CD8-positive, alpha-beta T cell (primary cell): ENCODE measurements at regions of chr16 and their contacts with region 1.

Region 1: GRCh38 chr16:12079412-12079965 is 103.0 kb downstream of the SNX29 start:
- DNase-seq: peak in 3 of 9 experiments; percentile 4 to 59 (median 21)
- ATAC-seq: peak; percentile 9
- H3K4me3 ChIP-seq: peak overlapping the region; percentile 12 to 13
- H3K4me3 Mint-ChIP-seq: peak overlapping the region; percentile 65
- H3K27ac ChIP-seq: peak overlapping the region; percentile 55 to 88
- H3K27ac Mint-ChIP-seq: peak overlapping the region; percentile 93
- H3K4me1 ChIP-seq: peaks cover 72% of the 10 kb centered on the region
- H3K4me1 Mint-ChIP-seq: peaks cover 77% of the 10 kb centered on the region
- H3K27me3 ChIP-seq: no peaks in the 10 kb centered on the region
- H3K27me3 Mint-ChIP-seq: no peaks in the 10 kb centered on the region
- CTCF ChIP-seq: no peak

Region 2: DNA sequence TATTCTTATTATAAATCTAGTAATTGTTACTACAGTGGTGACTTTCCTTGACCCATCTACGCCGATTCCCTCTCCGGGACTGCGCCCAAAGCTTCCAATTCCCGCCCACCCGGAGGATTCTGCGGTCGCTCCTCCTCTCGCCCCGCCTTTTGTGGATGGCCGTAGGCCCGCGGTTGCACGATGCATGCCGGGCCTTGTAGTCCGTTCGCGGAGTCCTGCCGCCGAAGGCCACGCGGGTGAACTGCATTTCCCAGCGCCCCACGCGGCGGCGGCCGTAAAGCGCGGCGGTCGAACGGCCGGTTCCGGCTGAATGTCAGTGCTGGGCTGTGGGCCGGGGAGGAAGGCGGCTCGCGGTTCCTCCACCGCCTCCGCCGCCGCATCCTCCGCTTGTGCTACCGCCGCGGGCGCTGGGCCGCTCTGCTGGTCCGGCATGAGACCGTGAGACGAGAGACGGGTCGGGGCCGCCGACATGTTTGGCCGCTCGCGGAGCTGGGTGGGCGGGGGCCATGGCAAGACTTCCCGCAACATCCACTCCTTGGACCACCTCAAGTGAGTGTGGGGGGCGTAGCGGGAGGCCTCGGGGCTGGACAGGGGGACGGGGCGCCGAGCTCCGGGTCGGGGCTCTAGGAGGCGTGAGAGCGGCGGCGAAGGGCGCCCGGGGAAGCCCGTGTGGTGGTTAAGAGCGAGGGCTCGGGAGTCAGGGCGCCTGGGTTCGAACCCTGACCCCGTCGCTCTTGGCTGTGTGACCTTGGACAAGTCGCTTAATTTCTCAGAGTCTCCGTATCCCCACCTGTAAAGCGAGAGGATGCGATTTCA is 1135.0 kb before region 1 on chr16 and contains the start of gene CLEC16A:
- CTCF ChIA-PET with region 1: no interaction called
- POLR2A ChIA-PET with region 1: no interaction called
- intact Hi-C with region 1: loop called (anchors 5 kb)
- DNase-seq: peak; percentile 91 to 98 (median 93)
- ATAC-seq: peak; percentile 70
- H3K4me3 ChIP-seq: peak within 1 kb of the TSS; percentile 66 to 76
- H3K4me3 Mint-ChIP-seq: peak within 1 kb of the TSS; percentile 93
- H3K27ac ChIP-seq: peak within 1 kb of the TSS; percentile 38 to 65
- H3K27ac Mint-ChIP-seq: peak within 1 kb of the TSS; percentile 82
- H3K4me1 ChIP-seq: peaks cover 60% of the 10 kb centered on the region
- H3K4me1 Mint-ChIP-seq: peaks cover 71% of the 10 kb centered on the region
- H3K27me3 ChIP-seq: no peaks in the 10 kb centered on the region
- H3K27me3 Mint-ChIP-seq: no peaks in the 10 kb centered on the region
- CTCF ChIP-seq: no peak
- total RNA-seq, gene CLEC16A: 20.5 to 21.9 TPM

Region 3: GRCh38 chr16:11232852-11233726 is 846.4 kb before region 1 on chr16:
- CTCF ChIA-PET with region 1: no interaction called
- POLR2A ChIA-PET with region 1: no interaction called
- intact Hi-C with region 1: no loop called
- DNase-seq: peak; percentile 59 to 94 (median 82)
- ATAC-seq: peak; percentile 84
- H3K4me3 ChIP-seq: peak overlapping the region; percentile 37 to 45
- H3K4me3 Mint-ChIP-seq: peak overlapping the region; percentile 63
- H3K27ac ChIP-seq: peak overlapping the region; percentile 78 to 94
- H3K27ac Mint-ChIP-seq: peak overlapping the region; percentile 94
- H3K4me1 ChIP-seq: peaks cover 44% of the 10 kb centered on the region
- H3K4me1 Mint-ChIP-seq: peaks cover 55% of the 10 kb centered on the region
- H3K27me3 ChIP-seq: no peaks in the 10 kb centered on the region
- H3K27me3 Mint-ChIP-seq: no peaks in the 10 kb centered on the region
- CTCF ChIP-seq: no peak

Region 4: DNA sequence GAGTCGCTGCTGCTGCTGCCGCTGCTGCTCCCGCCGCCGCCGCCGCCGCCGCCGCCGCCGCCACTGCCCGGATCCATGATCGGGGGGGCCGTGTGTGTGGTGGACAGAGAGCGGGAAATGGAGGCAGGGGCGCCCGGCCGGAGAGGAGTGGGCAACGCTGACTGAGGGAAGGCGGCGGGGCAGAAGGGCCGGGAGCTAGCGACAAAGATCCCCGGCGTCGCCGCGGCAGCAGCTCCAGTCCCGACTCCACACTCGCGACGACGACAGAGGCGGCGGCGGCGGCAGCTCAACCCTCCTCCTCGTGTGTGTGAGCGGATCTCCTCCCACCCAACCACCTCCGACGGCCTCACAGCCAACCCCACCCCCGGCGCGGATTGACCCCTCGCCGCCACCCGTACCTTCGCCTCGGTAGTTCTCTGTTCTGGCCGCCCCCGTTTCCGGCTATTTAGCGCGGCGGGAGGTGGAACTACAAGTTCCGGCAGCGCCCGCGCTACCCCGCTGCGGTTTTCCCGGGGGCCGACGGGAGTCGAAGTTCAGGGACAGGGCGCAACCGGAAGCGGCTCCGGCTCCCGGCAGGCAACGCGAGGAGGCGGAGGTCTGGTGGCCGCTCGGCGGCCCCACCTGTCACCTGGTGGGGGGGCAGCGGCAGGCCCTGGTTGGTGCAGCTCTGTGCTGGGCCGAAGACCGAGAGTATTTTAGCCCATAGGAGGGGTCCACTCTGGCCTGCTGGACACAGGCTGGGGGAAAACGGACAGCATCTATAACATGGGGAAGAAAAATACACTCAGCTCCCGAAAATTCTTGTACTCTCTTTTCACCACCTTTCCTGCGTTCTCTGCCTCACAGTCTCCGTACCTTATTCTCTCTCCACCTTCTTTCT is 163.6 kb before region 1 on chr16 and contains the start of gene GSPT1:
- CTCF ChIA-PET with region 1: no interaction called
- POLR2A ChIA-PET with region 1: interaction called, 3 read pairs
- intact Hi-C with region 1: loop called in 1 of 2 experiments (anchors 5 kb)
- DNase-seq: peak; percentile 98 to 100 (median 99)
- ATAC-seq: peak; percentile 89
- H3K4me3 ChIP-seq: peak within 1 kb of the TSS; percentile 52 to 68
- H3K4me3 Mint-ChIP-seq: peak within 1 kb of the TSS; percentile 94
- H3K27ac ChIP-seq: peak within 1 kb of the TSS; percentile 68 to 75
- H3K27ac Mint-ChIP-seq: peak within 1 kb of the TSS; percentile 98
- H3K4me1 ChIP-seq: peaks cover 24% of the 10 kb centered on the region
- H3K4me1 Mint-ChIP-seq: peaks cover 29% of the 10 kb centered on the region
- H3K27me3 ChIP-seq: no peaks in the 10 kb centered on the region
- H3K27me3 Mint-ChIP-seq: no peaks in the 10 kb centered on the region
- CTCF ChIP-seq: no peak
- total RNA-seq, gene GSPT1: 296 to 297 TPM

Region 5: GRCh38 chr16:11977376-11978041 is 102.0 kb before region 1 on chr16:
- CTCF ChIA-PET with region 1: no interaction called
- POLR2A ChIA-PET with region 1: interaction called, 8 read pairs
- intact Hi-C with region 1: loop called in 1 of 2 experiments (anchors 5 kb)
- DNase-seq: no peak
- ATAC-seq: no peak
- H3K4me3 ChIP-seq: peak overlapping the region; percentile 65 to 81
- H3K4me3 Mint-ChIP-seq: peak overlapping the region; percentile 91
- H3K27ac ChIP-seq: no peak overlapping the region
- H3K27ac Mint-ChIP-seq: peak overlapping the region; percentile 89
- H3K4me1 ChIP-seq: peaks cover 16% of the 10 kb centered on the region
- H3K4me1 Mint-ChIP-seq: peaks cover 42% of the 10 kb centered on the region
- H3K27me3 ChIP-seq: no peaks in the 10 kb centered on the region
- H3K27me3 Mint-ChIP-seq: no peaks in the 10 kb centered on the region
- CTCF ChIP-seq: no peak

Region 6: DNA sequence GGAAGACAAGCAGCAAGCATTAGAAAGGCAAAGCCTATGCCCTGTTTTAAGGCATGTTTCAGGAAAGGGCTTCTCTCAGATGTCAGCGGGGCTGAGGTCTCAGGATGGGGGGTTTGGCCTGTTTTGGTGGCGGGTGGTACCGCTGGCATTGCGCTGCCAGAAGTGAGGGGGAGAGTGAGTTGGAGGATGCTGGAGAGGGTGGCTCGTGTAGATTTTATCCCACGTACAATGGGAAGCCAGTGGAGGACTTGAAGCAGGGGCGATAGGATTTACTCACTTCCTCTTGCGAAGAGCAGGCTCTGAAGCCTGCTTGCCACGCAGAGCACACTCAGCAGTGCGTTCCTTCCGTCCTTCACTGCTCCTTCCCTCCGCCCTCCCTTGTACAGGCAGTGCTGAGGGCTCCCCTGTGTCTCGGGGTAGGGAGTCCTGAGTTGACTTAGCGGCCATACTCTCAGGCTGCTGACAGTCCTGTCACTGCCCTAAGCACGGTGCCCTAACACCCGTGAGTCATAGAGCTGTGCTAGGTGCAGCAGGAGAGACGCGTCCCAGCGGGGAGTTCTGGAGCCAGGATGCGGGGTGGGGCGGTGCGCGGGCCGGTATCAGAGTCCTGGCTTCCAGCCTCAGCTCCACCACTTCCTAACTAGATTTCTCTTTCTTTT is 10.1 kb after region 1 on chr16:
- CTCF ChIA-PET with region 1: interaction called, 120 read pairs
- POLR2A ChIA-PET with region 1: interaction called, 10 read pairs
- intact Hi-C with region 1: loop called in 1 of 2 experiments (anchors 1 kb)
- DNase-seq: peak in 7 of 9 experiments; percentile 22 to 66 (median 38)
- ATAC-seq: peak; percentile 91
- H3K4me3 ChIP-seq: peak overlapping the region; percentile 13 to 55
- H3K4me3 Mint-ChIP-seq: peak overlapping the region; percentile 83
- H3K27ac ChIP-seq: peak overlapping the region; percentile 34 to 58
- H3K27ac Mint-ChIP-seq: peak overlapping the region; percentile 94
- H3K4me1 ChIP-seq: peaks cover 31% of the 10 kb centered on the region
- H3K4me1 Mint-ChIP-seq: peaks cover 53% of the 10 kb centered on the region
- H3K27me3 ChIP-seq: no peaks in the 10 kb centered on the region
- H3K27me3 Mint-ChIP-seq: no peaks in the 10 kb centered on the region
- CTCF ChIP-seq: no peak

Region 7: GRCh38 chr16:12095275-12096156 is 16.0 kb after region 1 on chr16:
- CTCF ChIA-PET with region 1: interaction called, 120 read pairs
- POLR2A ChIA-PET with region 1: interaction called, 10 read pairs
- intact Hi-C with region 1: loop called in 1 of 2 experiments (anchors 2 kb)
- DNase-seq: peak in 8 of 9 experiments; percentile 50 to 83 (median 71)
- ATAC-seq: peak; percentile 48
- H3K4me3 ChIP-seq: peak overlapping the region; percentile 10 to 15
- H3K4me3 Mint-ChIP-seq: peak overlapping the region; percentile 73
- H3K27ac ChIP-seq: no peak overlapping the region
- H3K27ac Mint-ChIP-seq: peak overlapping the region; percentile 12
- H3K4me1 ChIP-seq: peaks cover 9% of the 10 kb centered on the region
- H3K4me1 Mint-ChIP-seq: peaks cover 35% of the 10 kb centered on the region
- H3K27me3 ChIP-seq: no peaks in the 10 kb centered on the region
- H3K27me3 Mint-ChIP-seq: no peaks in the 10 kb centered on the region
- CTCF ChIP-seq: peak; percentile 94

Region 8: DNA sequence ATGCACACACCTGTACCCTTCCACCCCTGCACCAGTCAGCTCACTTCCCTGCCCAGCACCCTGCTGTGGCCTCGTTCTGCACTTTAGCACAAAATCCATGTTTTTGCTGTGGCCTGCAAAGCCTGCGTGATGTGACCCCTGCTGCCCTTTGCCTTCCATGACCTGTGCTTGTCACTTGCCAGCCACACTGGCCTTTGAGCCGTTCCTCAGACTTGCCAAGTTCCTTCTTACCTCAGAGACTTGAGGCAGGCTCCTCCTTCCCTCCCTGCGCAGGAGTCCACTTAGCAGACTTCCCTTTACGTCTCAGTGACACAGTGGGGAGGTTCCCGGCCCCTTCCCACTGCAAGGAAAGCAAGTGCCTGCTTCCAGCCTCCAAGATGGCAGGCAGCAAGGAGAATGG is 31.7 kb after region 1 on chr16:
- CTCF ChIA-PET with region 1: no interaction called
- POLR2A ChIA-PET with region 1: no interaction called
- intact Hi-C with region 1: no loop called
- DNase-seq: no peak
- ATAC-seq: no peak
- H3K4me3 ChIP-seq: no peak overlapping the region
- H3K4me3 Mint-ChIP-seq: no peak overlapping the region
- H3K27ac ChIP-seq: no peak overlapping the region
- H3K27ac Mint-ChIP-seq: no peak overlapping the region
- H3K4me1 ChIP-seq: no peaks in the 10 kb centered on the region
- H3K4me1 Mint-ChIP-seq: no peaks in the 10 kb centered on the region
- H3K27me3 ChIP-seq: no peaks in the 10 kb centered on the region
- H3K27me3 Mint-ChIP-seq: no peaks in the 10 kb centered on the region
- CTCF ChIP-seq: no peak

Region 9: GRCh38 chr16:12124742-12125141 is 45.3 kb after region 1 on chr16:
- CTCF ChIA-PET with region 1: no interaction called
- POLR2A ChIA-PET with region 1: no interaction called
- intact Hi-C with region 1: no loop called
- DNase-seq: no peak
- ATAC-seq: no peak
- H3K4me3 ChIP-seq: no peak overlapping the region
- H3K4me3 Mint-ChIP-seq: peak overlapping the region; percentile 47
- H3K27ac ChIP-seq: no peak overlapping the region
- H3K27ac Mint-ChIP-seq: peak overlapping the region; percentile 79
- H3K4me1 ChIP-seq: no peaks in the 10 kb centered on the region
- H3K4me1 Mint-ChIP-seq: peaks cover 25% of the 10 kb centered on the region
- H3K27me3 ChIP-seq: no peaks in the 10 kb centered on the region
- H3K27me3 Mint-ChIP-seq: no peaks in the 10 kb centered on the region
- CTCF ChIP-seq: no peak

Region 10: DNA sequence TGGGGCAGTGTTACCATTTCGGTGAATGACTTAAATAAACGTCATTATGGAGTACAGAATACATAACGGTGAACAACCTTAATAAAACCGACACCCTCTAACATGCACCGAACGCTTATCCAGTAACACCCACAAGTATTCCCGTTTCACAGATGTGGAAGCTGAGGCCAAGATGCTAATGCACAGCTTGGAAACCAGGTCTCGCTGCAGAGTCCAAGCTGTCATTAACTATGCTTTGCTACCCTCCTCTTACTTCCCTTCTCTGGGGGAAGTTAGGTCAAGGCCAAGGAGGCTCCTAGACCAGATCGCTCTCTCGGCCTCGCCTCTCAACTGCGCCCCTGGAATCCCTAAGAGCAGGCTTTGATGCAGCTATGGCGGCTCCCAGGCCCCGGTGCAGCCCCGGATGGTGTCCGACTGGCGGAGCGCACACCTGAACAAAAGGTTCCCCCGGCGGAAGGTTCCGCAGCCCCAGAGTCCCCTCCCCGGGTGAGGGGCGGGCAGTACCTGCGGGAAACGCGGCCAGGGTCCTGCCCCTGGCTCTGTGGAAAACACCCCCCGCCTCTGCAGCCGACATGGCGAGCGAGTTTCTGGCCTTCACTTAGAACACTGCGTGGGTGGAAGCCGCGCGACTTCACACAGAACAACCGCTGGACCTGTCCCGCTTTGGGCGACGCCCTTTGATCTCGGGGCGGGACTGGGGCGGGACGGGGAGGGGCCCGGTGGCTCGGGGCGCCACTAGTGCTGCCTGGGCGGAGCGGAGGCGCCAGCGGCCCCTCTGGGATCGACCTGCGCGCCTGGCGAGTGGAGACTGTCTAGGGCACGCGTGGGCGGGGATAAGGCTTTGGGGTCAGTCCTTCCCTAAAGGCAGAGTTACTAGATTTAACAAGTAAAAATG is 724.0 kb after region 1 on chr16 and contains the start of gene CPPED1:
- CTCF ChIA-PET with region 1: interaction called, 3 read pairs
- POLR2A ChIA-PET with region 1: no interaction called
- intact Hi-C with region 1: loop called (anchors 1 to 5 kb)
- DNase-seq: peak; percentile 83 to 95 (median 88)
- ATAC-seq: peak; percentile 94
- H3K4me3 ChIP-seq: peak within 1 kb of the TSS; percentile 71 to 86
- H3K4me3 Mint-ChIP-seq: peak within 1 kb of the TSS; percentile 88
- H3K27ac ChIP-seq: peak within 1 kb of the TSS; percentile 55 to 87
- H3K27ac Mint-ChIP-seq: peak within 1 kb of the TSS; percentile 92
- H3K4me1 ChIP-seq: peaks cover 9% of the 10 kb centered on the region
- H3K4me1 Mint-ChIP-seq: peaks cover 22% of the 10 kb centered on the region
- H3K27me3 ChIP-seq: no peaks in the 10 kb centered on the region
- H3K27me3 Mint-ChIP-seq: peaks cover 3% of the 10 kb centered on the region
- CTCF ChIP-seq: no peak
- total RNA-seq, gene CPPED1: 0.89 to 1.1 TPM